OCI-LY7 (cell line): ENCODE measurements at regions of chr1 and their contacts with region 1.

Region 1: DNA sequence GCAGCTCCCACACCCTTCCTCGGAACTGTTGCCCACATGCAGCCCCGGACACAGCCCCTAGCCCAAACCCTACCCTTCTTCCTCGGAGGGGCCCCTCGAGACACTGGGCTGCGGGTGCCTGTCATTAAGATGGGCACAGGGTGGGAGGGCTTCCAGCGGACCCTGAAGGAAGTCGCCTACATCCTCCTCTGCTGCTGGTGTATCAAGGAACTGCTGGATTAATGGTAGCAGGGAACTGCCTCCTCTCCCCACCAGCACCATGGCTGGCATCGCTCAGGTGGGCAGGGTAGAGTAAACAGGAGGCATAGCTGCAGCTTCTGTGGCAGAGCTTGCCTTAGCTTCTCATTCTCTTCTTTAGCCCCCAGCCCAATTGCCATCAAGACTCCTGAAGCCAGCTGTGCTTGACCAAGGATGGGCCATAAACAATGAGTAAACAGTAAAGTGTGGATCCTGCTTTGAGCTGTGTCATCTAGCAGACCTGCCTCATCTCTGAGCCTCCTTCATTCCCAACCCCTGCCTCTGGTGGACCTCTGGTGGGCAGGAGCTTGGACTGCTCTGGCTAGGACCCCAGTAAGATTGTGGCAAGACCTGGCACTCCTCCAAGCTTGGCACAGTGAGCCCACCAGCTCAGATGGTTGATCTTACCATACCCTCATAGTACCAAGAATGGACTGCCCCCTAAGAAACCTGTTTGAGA is at the start of gene LENEP:
- DNase-seq: no peak
- H3K4me3 ChIP-seq: no peak within 1 kb of the TSS
- H3K27ac ChIP-seq: peak within 1 kb of the TSS; percentile 20
- H3K4me1 ChIP-seq: peaks cover 33% of the 10 kb centered on the region
- CTCF ChIP-seq: no peak
- total RNA-seq, gene LENEP: 0.95 and 2.3 TPM in 2 replicates

Region 2: GRCh38 chr1:154982897-154983648 is 10.6 kb before region 1 on chr1 and contains the start of gene FLAD1:
- CTCF ChIA-PET with region 1: interaction called, 6 read pairs
- POLR2A ChIA-PET with region 1: interaction called, 16 read pairs
- intact Hi-C with region 1: no loop called
- DNase-seq: peak; percentile 100
- H3K4me3 ChIP-seq: peak within 1 kb of the TSS; percentile 77
- H3K27ac ChIP-seq: peak within 1 kb of the TSS; percentile 80
- H3K4me1 ChIP-seq: peaks cover 21% of the 10 kb centered on the region
- CTCF ChIP-seq: no peak
- total RNA-seq, gene FLAD1: 52.7 and 55.7 TPM in 2 replicates